AG04450 (cell line): ENCODE measurements at regions of chr1 and their contacts with region 1.

Region 1: DNA sequence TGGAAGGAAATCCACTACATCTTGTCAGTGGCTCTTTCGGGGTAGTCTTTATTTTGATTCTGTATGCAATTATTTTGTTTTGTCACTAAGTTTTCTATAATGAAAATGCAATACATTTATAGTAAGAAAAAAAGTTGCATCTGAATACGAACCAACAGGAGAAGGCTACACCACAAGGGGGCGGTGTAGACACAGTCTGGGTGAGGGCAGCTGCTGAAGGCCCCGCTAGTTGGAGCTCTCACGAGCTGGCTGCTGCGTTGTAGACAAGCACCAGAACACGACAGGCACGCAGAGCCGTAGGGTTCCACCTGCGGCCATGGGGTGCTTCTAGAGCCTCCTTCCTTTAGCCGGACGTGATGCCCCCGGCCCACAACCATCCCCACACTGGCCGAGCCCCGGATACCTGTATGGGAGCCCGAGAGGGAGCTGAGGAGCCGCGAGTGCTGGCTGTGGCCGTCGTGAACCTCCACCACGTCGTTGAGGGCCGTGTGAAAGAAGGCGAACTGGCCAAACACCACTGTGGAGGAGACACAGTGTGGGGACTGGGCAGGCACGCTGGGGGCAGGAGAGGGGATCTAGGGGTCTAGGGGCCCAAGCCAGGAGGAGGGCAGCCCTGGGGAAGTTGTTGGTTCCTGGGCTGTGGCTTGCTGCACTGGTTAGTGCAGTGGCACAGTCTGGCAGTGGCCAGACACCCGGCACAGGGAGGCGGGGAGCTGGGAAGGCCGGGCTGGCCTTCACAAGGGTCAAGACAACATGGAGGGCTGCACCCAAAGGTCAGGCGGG is 160.8 kb downstream of the ZSCAN20 start:
- DNase-seq: peak; percentile 75
- H3K4me3 ChIP-seq: no peak overlapping the region
- H3K27ac ChIP-seq: no peak overlapping the region
- H3K27me3 ChIP-seq: no peaks in the 10 kb centered on the region
- CTCF ChIP-seq: peak; percentile 100

Region 2: DNA sequence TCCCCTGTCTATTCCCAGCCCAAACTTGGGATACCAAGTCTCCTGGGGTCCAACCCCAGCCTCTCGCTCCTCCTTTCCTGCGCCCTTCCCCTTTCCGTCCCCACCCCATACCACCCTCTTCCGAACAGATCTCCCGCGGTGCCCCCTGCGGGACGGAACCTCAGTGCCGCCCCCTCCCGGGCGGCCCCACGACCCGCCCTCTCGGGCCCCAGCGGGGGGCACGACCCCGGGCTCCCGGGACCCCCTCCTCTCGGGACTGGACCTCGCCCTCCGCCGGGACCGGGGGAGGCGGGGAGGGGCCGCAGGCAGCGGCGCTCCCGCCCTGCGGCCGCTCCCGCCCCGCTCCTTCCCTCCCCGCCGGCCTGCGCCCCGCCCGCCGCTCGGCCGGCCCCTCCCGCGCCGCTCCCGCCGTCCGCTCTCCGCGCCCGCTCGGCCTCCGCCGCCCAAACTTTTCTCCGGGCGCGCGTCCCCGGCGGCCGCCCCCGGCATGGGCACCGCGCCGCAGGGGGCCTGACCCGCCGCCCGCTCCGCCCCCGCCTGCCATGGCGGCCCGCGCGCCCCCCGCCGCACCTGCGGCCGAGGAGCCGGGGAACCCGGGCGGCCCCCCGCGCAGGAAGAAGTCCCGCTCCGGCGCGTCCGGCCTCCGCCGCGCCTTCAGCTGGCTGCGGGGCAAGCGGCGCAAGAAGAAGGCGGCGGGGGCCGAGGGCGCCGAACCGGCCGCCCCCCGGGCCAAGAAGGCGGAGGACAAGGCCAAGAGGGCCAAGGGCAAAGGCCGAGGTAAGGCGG is 891.6 kb before region 1 on chr1:
- CTCF ChIA-PET with region 1: no interaction called
- POLR2A ChIA-PET with region 1: no interaction called
- DNase-seq: no peak
- H3K4me3 ChIP-seq: peak overlapping the region; percentile 68
- H3K27ac ChIP-seq: no peak overlapping the region
- H3K27me3 ChIP-seq: no peaks in the 10 kb centered on the region
- CTCF ChIP-seq: peak; percentile 47

Region 3: GRCh38 chr1:33586111-33586510 is 47.1 kb before region 1 on chr1:
- CTCF ChIA-PET with region 1: interaction called, 10 read pairs
- POLR2A ChIA-PET with region 1: no interaction called
- DNase-seq: no peak
- H3K4me3 ChIP-seq: no peak overlapping the region
- H3K27ac ChIP-seq: no peak overlapping the region
- H3K27me3 ChIP-seq: no peaks in the 10 kb centered on the region
- CTCF ChIP-seq: no peak

Region 4: DNA sequence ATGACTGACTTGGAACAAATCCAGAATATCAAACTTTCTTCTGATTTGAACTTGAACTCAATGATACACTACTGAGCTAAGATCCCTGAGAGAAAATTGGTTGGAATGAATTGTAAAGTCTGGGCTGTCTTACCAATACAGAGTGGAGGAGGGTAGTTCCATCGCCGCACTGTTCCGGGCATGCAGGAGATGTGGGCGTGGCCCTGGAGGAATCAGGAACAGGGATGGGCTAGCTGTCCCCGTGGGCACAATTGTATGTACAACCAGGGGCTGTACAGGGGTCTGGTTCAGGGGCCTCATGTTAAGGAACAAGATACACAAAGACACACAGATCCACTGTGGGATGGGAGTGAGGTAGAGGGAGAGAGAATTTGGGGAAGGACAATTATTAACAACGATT is 16.4 kb before region 1 on chr1:
- CTCF ChIA-PET with region 1: interaction called, 19 read pairs
- POLR2A ChIA-PET with region 1: no interaction called
- DNase-seq: no peak
- H3K4me3 ChIP-seq: no peak overlapping the region
- H3K27ac ChIP-seq: no peak overlapping the region
- H3K27me3 ChIP-seq: no peaks in the 10 kb centered on the region
- CTCF ChIP-seq: no peak

Region 5: DNA sequence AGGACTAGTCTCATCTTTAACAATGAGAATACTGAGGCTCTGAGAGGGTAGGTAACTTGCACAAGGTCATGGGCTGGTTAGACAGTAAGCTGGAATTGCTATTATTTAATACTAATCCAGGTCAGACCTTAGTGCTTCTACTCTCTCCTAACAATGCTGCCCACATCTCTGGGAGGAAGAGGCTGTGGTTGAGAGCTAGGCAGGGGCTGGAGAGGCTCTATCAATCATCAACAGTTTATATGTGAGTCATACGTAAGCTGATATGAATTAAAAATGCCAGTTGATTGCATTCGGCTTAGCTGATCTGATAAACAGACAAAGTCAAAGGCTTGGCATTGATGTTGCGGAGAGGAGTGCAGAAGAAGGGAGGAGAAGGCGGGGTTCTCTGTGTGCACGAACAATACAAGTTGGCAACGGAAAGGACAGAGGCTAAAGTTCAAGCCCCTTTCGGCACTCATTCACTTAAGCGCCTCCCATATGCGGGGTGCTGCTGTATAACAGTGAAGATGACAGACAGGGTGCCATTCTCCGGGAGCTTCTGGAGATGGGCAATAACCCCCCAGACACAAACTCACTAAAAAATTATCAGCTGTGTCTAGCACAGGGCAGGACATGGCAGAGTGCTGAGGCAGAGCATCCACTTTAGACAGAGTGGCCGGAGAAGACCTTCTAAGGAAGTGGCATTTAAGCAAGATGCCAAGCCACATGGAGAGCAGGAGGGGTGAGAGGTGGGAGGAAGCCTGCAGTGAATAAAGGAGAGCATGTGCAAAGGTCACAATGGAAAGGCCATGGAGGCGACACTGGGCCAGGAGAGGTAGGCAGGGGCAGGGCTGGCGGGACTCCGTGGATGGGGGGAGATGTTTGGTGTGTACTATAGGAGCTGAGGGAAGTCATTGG is 34.4 kb after region 1 on chr1:
- CTCF ChIA-PET with region 1: interaction called, 13 read pairs
- POLR2A ChIA-PET with region 1: no interaction called
- DNase-seq: no peak
- H3K4me3 ChIP-seq: no peak overlapping the region
- H3K27ac ChIP-seq: no peak overlapping the region
- H3K27me3 ChIP-seq: no peaks in the 10 kb centered on the region
- CTCF ChIP-seq: no peak

Region 6: DNA sequence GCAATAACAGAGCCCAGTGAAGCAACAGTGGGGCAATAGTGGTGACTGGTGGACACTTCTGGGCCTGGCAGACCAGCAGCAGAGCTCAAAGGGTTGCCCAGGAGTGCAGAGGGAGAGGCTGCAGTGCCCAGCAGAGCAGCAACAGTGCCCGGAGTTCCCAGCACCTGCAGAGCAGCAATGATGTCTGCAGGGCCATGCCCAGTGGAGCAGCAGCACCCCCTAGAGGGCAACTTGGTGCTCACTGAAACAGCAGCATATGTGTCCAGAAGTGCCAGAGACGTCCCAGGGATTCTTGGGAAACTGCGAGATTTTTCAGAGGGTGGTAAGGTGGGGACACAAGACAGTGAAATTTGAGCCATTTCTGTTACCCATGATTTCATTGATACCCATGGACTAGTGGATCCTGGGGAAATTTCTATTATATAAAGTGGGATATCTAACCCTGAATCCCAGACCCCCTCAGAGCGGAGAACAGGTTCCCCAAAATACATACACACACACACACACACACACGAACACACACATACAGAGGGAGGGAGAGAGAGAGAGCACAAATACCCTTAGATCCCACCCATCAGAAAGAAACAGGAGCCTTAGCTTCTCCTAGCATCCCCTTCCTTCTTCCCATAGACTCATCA is 964.8 kb after region 1 on chr1:
- CTCF ChIA-PET with region 1: interaction called, 57 read pairs
- POLR2A ChIA-PET with region 1: no interaction called
- DNase-seq: peak; percentile 16
- H3K4me3 ChIP-seq: no peak overlapping the region
- H3K27ac ChIP-seq: no peak overlapping the region
- H3K27me3 ChIP-seq: no peaks in the 10 kb centered on the region
- CTCF ChIP-seq: peak; percentile 87